Dorsolateral prefrontal cortex (tissue), 120 donors: ENCODE measurements at regions of chr9 and their contacts with region 1.

Region 1: GRCh38 chr9:13568841-13569601 is 289.5 kb upstream of the MPDZ start:
- DNase-seq: peak in 8 of 10 donors; percentile 17 to 70 (median 47)
- H3K4me3 ChIP-seq: peak overlapping the region; percentile 14 to 71 (median 50)
- H3K27ac ChIP-seq: peak overlapping the region; percentile 25 to 96 (median 89)
- H3K27me3 ChIP-seq: no peaks in the 10 kb centered on the region
- CTCF ChIP-seq: peak in 3 of 56 donors; percentile 3 to 6 (median 5)

Region 2: GRCh38 chr9:13450723-13451122 is 118.3 kb before region 1 on chr9:
- intact Hi-C with region 1: loop called (anchors 10 kb)
- DNase-seq: no peak
- H3K4me3 ChIP-seq: peak overlapping the region in 2 of 59 donors; percentile 11 to 32
- H3K27ac ChIP-seq: peak overlapping the region in 51 of 59 donors; percentile 6 to 87 (median 68)
- H3K27me3 ChIP-seq: no peaks in the 10 kb centered on the region
- CTCF ChIP-seq: peak in 3 of 56 donors; percentile 17 to 26 (median 21)

Region 3: DNA sequence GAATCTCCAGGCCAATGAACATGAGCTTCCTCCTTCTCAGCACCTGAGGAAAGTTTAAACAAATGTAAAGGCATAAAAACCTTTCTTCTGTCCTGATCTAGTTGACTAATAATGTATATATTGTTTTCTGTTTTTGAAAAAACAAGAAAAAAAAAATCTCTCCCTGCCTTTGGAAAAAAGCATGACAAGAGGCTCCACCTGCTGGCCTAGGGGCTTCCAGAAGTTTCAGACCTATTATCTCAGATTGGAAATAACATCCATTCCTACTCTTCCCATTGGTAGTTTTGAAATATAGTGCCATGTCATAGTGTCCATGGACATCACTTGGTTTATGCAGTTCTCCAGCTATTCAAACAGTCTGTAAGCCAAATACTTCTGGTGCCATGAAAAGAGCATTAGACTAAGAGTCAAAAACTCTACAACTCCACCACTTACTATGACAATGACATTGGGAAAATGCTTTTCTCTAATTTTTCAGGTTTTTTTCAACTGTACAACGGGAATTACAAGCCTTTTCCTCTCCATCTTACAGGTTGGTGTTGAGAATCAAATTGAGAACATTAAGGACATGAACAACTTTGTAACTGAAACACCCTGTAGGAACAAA is 120.1 kb after region 1 on chr9:
- intact Hi-C with region 1: loop called (anchors 2 to 5 kb)
- DNase-seq: peak in 4 of 10 donors; percentile 11 to 44 (median 28)
- H3K4me3 ChIP-seq: no peak overlapping the region
- H3K27ac ChIP-seq: peak overlapping the region in 16 of 59 donors; percentile 10 to 72 (median 45)
- H3K27me3 ChIP-seq: no peaks in the 10 kb centered on the region
- CTCF ChIP-seq: peak in 55 of 56 donors; percentile 11 to 79 (median 57)

Region 4: GRCh38 chr9:13770956-13771355 is 201.9 kb after region 1 on chr9:
- intact Hi-C with region 1: no loop called
- DNase-seq: no peak
- H3K4me3 ChIP-seq: no peak overlapping the region
- H3K27ac ChIP-seq: no peak overlapping the region
- H3K27me3 ChIP-seq: no peaks in the 10 kb centered on the region
- CTCF ChIP-seq: no peak

Region 5: DNA sequence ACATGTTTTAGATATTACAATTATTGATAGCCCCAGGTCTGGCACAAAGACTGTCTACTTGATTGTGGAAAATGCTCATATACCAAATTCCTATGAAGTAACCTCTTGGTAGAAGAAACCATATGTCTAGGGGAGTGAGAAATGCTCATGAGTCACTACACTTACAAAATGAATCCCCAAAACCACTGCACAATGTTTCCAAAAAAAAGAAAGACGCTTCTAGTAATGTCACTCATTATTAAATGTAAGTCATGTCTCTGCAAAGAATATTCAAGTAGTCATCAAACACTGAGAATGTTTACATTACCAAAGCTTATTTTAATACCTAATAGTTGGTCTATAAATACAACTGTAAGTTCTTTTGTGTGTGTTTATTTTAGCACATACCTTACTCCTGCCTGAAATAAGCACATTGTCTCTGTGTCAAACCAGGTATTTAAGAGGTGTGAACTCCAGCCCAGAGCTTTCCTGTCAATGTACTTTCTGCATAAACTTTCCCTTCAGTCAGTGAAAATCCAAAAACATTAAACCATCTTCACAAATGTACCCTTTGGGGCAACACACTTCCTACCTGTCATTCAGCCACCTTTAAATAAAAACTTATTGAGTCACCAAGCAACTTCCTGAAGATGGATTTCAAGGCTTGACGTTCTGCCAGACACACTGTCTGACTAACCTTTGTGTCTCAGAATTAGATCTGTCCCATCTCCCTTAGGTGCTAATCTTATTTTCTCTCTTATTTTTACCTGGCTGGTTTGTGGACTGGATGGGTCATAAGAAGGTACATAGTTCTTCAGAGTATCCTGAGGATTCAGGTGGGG is 550.9 kb after region 1 on chr9:
- intact Hi-C with region 1: loop called in 1 of 2 experiments (anchors 10 kb)
- DNase-seq: no peak
- H3K4me3 ChIP-seq: no peak overlapping the region
- H3K27ac ChIP-seq: no peak overlapping the region
- H3K27me3 ChIP-seq: no peaks in the 10 kb centered on the region
- CTCF ChIP-seq: no peak